H1 (cell line): ENCODE measurements at regions of chr11 and their contacts with region 1.

Region 1: DNA sequence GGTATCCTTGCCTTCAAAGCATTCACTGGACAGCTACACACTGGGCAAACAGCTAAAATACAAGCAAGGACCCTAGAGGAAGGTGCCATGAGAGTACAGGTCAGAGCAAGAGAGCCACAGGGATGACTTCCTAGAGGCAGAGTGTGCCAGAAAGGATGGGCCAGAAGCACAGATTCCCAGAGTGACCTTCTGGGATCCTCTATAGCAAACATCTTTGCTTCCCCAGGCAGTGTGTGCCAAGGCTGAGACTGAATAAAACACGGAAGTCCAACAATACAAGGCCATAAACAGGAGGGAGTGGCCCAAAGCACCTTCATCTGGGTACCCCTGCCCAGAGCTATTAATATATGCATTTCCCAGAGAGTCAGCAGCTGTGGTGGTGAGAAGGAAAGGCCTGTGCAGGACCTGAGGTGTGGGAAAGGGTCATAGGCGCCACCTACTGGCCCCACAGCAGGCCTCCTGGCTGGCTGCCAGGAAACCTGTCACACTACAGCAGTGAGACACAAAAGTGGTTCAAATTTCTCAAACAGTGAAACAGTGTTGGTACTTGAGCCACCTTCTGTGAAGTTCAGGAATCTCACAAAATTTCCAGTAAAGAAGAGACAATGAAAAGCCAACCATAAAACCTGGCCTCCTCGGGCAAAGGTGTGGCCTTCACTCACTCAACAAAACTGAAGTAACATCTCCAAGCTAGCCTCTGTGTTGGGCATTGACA is 20.3 kb downstream of the CLPB start:
- DNase-seq: peak in 1 of 2 experiments; percentile 79
- H3K4me3 ChIP-seq: no peak overlapping the region
- H3K27ac ChIP-seq: no peak overlapping the region
- H3K4me1 ChIP-seq: peaks cover 0 to 28% (median 13%) of the 10 kb centered on the region in 4 experiments; a peak in 6 of 7 replicates
- H3K27me3 ChIP-seq: no peaks in the 10 kb centered on the region
- CTCF ChIP-seq: peak; percentile 85 to 90 (median 88)
- EP300 ChIP-seq: no peak
- POLR2A ChIP-seq: no peak
- RAD21 ChIP-seq: peak; percentile 83 to 87

Region 2: DNA sequence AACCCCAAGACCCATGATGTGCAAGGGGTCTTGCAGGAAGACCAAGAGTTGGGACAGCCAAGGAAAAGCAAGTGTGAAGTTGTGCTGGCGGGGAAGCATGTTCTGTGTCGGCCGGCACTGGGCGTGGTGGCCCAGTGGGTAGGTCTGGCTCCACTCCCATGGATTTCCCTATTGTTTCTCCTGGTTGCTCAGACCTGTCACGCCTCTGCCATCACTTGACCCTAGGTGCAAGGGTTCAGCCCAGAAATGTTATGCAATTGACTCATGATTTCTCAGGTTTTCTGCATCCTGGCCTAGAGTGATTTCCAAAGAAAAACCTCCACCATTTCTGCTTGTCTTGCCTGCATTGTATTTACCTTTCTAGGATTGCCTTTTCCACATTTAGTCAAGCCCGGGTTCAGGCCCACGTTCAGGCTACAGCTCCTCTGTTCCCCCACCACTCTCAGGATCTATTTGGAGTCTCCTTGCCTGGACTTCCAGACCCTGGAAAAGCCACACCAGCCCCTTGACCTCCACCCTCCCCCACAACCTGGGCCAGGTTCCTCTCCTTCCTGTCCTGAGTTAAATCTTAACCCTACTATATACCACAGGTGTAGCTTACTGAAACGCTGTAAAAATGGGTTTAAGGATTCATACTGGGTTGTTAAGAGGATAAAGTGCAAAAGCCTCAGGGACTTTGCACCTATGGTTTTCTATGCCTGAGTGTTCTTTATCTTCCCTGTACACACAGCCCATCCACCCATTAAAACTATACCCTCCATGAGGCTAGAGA is 239.6 kb before region 1 on chr11:
- CTCF ChIA-PET with region 1: no interaction called
- POLR2A ChIA-PET with region 1: no interaction called
- DNase-seq: no peak
- H3K4me3 ChIP-seq: no peak overlapping the region
- H3K27ac ChIP-seq: no peak overlapping the region
- H3K4me1 ChIP-seq: no peaks in the 10 kb centered on the region
- H3K27me3 ChIP-seq: no peaks in the 10 kb centered on the region
- CTCF ChIP-seq: no peak
- EP300 ChIP-seq: no peak
- POLR2A ChIP-seq: no peak
- RAD21 ChIP-seq: no peak

Region 3: DNA sequence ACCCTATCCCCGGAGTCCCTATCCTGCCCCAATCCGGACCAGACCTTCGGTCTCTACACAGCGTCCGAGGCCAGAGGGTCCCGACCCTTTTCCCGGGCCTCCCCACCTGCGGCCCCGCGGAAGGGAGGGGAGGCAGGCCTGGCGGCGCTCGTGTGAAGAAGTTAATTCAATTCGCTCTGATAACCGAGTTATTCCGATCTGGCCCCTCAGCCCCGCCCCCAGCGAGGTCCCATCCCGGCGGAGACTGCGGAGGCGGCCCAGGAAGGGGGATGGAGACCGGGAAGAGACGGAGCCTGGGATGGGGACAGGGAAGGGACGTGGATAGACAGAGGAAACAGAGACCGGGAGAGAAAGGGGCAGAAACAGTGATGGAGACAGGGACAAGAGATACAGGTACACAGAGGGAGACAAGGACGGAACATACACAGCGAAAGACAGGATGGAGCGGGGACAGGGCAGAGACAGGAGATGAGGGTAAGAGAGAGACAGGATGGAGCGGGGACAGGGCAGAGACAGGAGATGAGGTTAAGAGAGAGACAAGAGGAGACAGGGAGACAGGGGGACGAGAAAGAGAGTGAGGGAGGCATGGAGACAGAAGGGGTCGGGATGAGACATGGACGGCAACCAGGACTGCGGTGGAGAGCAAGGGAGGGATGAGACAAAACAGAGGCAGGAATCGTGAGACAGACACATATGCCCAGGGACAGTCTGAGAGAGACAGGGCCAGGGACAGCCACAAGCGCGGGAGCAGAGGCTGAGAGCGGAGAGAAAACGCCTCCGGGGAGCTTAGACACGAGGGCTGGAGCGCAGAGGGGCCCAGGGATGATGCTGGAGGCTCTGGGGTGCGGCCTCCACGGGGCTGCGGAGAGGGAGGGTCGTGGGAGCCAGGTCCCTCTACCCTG is 169.5 kb before region 1 on chr11:
- CTCF ChIA-PET with region 1: interaction called, 29 read pairs
- POLR2A ChIA-PET with region 1: interaction called, 3 read pairs
- DNase-seq: peak in 1 of 2 experiments; percentile 83
- H3K4me3 ChIP-seq: peak overlapping the region; percentile 53 to 87 (median 58)
- H3K27ac ChIP-seq: no peak overlapping the region
- H3K4me1 ChIP-seq: peaks cover 2 to 24% (median 11%) of the 10 kb centered on the region in 4 experiments
- H3K27me3 ChIP-seq: peaks cover 69 to 85% (median 81%) of the 10 kb centered on the region in 4 experiments
- CTCF ChIP-seq: no peak
- EP300 ChIP-seq: no peak
- POLR2A ChIP-seq: no peak
- RAD21 ChIP-seq: no peak

Region 4: GRCh38 chr11:72293910-72294615 is 120.0 kb before region 1 on chr11:
- CTCF ChIA-PET with region 1: interaction called, 21 read pairs
- POLR2A ChIA-PET with region 1: no interaction called
- DNase-seq: peak in 1 of 2 experiments; percentile 34
- H3K4me3 ChIP-seq: no peak overlapping the region
- H3K27ac ChIP-seq: no peak overlapping the region
- H3K4me1 ChIP-seq: no peaks in the 10 kb centered on the region
- H3K27me3 ChIP-seq: no peaks in the 10 kb centered on the region
- CTCF ChIP-seq: no peak
- EP300 ChIP-seq: no peak
- POLR2A ChIP-seq: no peak
- RAD21 ChIP-seq: no peak

Region 5: DNA sequence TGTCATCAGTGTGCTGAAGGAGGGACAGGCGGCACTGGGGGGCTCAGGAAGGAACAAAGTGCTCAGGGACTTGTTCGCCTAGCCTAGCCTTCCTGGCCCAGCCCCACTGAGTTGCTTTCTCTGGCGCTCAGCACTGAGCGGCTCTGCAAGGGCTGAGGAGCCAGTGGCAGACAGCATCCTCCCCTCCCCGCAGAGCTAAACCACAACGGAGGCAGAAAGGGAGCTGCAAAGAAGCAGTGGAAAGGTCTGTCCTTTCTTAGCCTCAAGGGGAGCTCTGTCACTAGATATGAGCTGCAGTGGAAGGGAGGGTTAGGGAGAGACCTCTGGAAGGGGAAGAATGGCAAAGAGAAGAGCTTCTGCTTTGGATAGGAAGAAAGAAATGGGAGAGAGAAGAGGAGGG is 80.4 kb before region 1 on chr11:
- CTCF ChIA-PET with region 1: interaction called, 21 read pairs
- POLR2A ChIA-PET with region 1: no interaction called
- DNase-seq: peak; percentile 59 to 66
- H3K4me3 ChIP-seq: peak overlapping the region in 2 of 4 experiments; percentile 15 to 16; a peak in 1 of 8 replicates
- H3K27ac ChIP-seq: no peak overlapping the region
- H3K4me1 ChIP-seq: peaks cover 5 to 17% (median 9%) of the 10 kb centered on the region in 4 experiments
- H3K27me3 ChIP-seq: no peaks in the 10 kb centered on the region
- CTCF ChIP-seq: peak; percentile 15 to 81 (median 78)
- EP300 ChIP-seq: no peak
- POLR2A ChIP-seq: no peak
- RAD21 ChIP-seq: peak; percentile 71 to 85

Region 6: DNA sequence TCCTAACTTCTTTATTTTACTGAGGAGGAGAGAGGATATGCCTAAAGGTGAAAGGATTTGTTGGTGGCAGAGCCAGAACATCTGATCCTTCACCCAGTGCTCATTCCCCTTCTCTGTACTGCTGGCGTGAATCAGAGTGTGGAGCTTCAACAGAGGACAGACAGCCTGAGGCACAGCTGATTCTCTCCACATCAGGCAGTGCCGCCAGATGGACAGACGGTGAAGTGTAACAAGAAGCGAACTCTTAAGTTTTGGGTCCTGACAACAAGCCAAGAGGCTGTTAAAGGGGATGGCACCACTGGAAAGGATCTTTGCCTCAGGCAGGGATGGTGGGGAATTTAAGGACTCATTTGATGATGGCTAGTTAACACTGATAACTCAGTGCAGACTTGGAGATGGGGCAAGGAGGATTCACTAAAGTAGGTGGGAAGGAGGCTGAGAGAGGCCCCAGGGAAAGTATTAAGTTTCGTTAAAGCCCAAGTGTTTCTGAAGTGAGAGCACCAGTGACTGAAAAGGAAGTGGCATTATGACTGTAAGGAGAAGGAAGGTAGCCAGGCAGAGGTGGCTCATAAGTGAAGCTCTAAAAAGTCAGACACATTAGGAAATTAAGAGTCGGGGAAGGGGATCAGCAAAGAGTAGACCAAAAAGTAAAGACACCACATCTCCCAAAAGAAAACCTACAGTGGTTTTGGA is 61.1 kb before region 1 on chr11:
- CTCF ChIA-PET with region 1: interaction called, 66 read pairs
- POLR2A ChIA-PET with region 1: no interaction called
- DNase-seq: peak in 1 of 2 experiments; percentile 17
- H3K4me3 ChIP-seq: no peak overlapping the region
- H3K27ac ChIP-seq: no peak overlapping the region
- H3K4me1 ChIP-seq: peaks cover 0 to 8% (median 0%) of the 10 kb centered on the region in 4 experiments; a peak in 1 of 7 replicates
- H3K27me3 ChIP-seq: no peaks in the 10 kb centered on the region
- CTCF ChIP-seq: peak; percentile 37 to 68 (median 44)
- EP300 ChIP-seq: no peak
- POLR2A ChIP-seq: no peak
- RAD21 ChIP-seq: peak; percentile 63 to 69

Region 7: DNA sequence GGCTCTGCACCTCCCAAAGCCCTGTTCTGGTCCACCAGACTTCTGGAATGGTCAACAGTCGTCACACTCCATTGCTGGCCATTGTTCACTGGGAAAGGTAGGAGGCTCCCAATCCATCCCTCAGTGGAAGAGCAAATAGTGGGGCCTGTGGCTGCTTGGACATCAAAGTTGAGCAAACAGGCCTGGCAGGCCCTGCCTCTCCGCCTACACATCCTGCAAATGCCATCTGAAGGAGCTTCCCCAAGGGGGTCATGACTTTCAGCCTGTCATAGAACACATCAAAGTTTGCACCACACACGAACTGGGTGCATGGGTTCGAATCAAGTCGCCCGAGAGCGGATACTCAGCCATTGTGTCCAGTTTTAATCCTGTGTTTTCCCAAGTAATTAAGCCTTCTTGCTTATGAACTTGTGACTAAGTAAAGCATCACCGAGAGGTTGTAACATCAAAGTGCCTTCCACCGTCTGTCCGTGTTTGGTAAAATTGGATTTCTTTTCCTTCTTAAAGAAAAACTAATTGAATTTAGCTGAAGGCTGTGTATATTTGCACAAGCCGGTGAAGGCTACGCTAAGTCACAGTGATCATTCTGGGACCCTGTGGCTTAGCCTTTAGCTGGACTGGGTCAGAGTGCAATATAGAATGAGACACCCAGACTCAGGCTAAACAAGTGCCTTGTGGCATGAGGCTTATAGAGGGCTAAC is 15.9 kb before region 1 on chr11:
- CTCF ChIA-PET with region 1: interaction called, 20 read pairs
- POLR2A ChIA-PET with region 1: interaction called, 4 read pairs
- DNase-seq: peak in 1 of 2 experiments; percentile 32
- H3K4me3 ChIP-seq: no peak overlapping the region
- H3K27ac ChIP-seq: no peak overlapping the region
- H3K4me1 ChIP-seq: no peaks in the 10 kb centered on the region; a peak in 1 of 7 replicates
- H3K27me3 ChIP-seq: no peaks in the 10 kb centered on the region; a peak in 1 of 7 replicates
- CTCF ChIP-seq: no peak
- EP300 ChIP-seq: no peak
- POLR2A ChIP-seq: no peak
- RAD21 ChIP-seq: no peak

Region 8: GRCh38 chr11:72736452-72737069 is 322.5 kb after region 1 on chr11:
- CTCF ChIA-PET with region 1: no interaction called
- POLR2A ChIA-PET with region 1: no interaction called
- DNase-seq: no peak
- H3K4me3 ChIP-seq: no peak overlapping the region
- H3K27ac ChIP-seq: no peak overlapping the region; the same call in 1 of the 2 replicates
- H3K4me1 ChIP-seq: peaks cover 0 to 27% (median 15%) of the 10 kb centered on the region in 4 experiments; a peak in 6 of 7 replicates
- H3K27me3 ChIP-seq: no peaks in the 10 kb centered on the region
- CTCF ChIP-seq: no peak
- EP300 ChIP-seq: no peak
- POLR2A ChIP-seq: no peak
- RAD21 ChIP-seq: no peak